ENCODE measurements at regions of chr7 and their contacts with region 1.

Region 1: GRCh38 chr7:94449148-94449725 is 54.5 kb downstream of the COL1A2 start:
- DNase-seq: no peak
- ATAC-seq: no peak
- H3K4me3 Mint-ChIP-seq: no peak overlapping the region
- H3K27ac Mint-ChIP-seq: no peak overlapping the region
- H3K4me1 Mint-ChIP-seq: no peaks in the 10 kb centered on the region
- H3K27me3 Mint-ChIP-seq: peaks cover 29% of the 10 kb centered on the region

Region 2: GRCh38 chr7:94426980-94427875 is 22.0 kb before region 1 on chr7:
- CTCF ChIA-PET with region 1: no interaction called
- DNase-seq: no peak
- ATAC-seq: no peak
- H3K4me3 Mint-ChIP-seq: no peak overlapping the region
- H3K27ac Mint-ChIP-seq: no peak overlapping the region
- H3K4me1 Mint-ChIP-seq: no peaks in the 10 kb centered on the region
- H3K27me3 Mint-ChIP-seq: peaks cover 2% of the 10 kb centered on the region

Region 3: DNA sequence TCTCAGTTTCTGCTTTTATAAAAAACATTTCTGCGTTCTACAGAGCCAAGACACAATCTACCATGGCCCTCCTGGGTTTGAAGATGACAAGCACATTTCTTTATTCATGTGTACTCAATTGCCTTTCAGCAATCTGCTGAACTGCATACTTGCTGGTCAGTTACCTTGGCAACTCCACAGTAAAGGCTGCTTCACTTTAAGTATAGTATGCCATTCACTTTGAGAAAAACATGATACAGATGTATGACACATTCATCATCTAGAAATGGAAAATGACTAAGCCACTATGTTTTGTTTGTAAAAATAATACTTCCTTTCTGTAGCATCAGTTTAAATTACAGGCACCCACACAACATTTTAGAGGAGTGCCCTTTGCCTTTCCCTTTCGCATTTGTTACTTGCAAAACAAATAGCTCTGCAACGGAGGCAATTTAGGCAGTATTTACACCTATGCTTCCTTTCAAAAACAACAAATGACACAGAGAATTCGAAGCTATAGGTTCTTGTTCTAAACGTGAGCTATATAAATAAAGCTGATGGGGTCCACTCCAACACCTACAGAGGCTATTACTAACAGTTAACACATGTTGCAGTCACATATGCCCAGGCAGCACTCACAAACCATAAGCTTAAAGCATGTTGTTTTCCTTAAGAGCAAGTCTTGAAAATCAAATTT is 183.2 kb after region 1 on chr7:
- CTCF ChIA-PET with region 1: no interaction called
- DNase-seq: no peak
- ATAC-seq: no peak
- H3K4me3 Mint-ChIP-seq: no peak overlapping the region
- H3K27ac Mint-ChIP-seq: no peak overlapping the region
- H3K4me1 Mint-ChIP-seq: no peaks in the 10 kb centered on the region
- H3K27me3 Mint-ChIP-seq: peaks cover 25% of the 10 kb centered on the region

Region 4: DNA sequence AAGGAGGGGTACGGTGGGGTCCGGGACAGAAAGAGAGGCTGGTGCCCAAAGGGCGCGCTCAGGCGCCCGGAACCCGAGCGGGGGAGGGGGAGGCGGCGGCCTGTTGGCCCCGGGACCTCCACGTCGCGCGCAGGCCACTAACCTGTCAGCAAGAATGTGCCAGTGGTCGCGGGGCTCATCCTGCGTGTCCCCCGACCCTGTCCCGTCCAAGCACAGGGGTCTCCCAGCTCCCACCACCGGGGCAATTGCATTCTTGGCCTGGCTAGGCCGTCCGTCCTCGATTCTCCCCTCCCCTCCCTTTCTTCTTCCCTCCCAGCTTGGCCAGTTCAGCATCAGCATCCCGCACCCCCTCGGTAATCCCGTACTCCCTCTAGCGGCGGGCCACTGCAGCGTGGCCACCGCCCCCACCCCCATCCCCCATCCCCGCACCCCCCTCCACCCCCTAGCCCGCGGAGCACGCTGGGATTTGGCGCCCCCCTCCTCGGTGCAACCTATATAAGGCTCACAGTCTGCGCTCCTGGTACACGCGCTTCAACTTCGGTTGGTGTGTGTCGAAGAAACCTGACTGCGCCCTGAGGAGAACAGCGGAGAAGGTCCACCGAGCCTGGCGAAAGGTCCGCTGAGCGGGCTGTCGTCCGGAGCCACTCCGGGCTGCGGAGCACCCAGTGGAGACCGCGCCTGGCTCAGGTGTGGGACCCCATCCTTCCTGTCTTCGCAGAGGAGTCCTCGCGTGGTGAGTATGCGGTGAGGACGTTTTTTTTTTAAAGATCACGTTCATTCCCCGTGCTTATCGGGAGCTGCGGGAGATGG is 206.8 kb after region 1 on chr7 and contains the start of gene SGCE:
- CTCF ChIA-PET with region 1: interaction called, 15 read pairs
- DNase-seq: peak; percentile 59
- ATAC-seq: no peak
- H3K4me3 Mint-ChIP-seq: peak within 1 kb of the TSS; percentile 73
- H3K27ac Mint-ChIP-seq: peak within 1 kb of the TSS; percentile 79
- H3K4me1 Mint-ChIP-seq: peaks cover 19% of the 10 kb centered on the region
- H3K27me3 Mint-ChIP-seq: peaks cover 39% of the 10 kb centered on the region
- total RNA-seq, gene SGCE: 2.4 to 3.2 TPM

Region 5: GRCh38 chr7:95476904-95477594 is 1027.8 kb after region 1 on chr7:
- CTCF ChIA-PET with region 1: interaction called, 19 read pairs
- DNase-seq: peak; percentile 71
- ATAC-seq: no peak
- H3K4me3 Mint-ChIP-seq: no peak overlapping the region
- H3K27ac Mint-ChIP-seq: no peak overlapping the region
- H3K4me1 Mint-ChIP-seq: peaks cover 7% of the 10 kb centered on the region
- H3K27me3 Mint-ChIP-seq: peaks cover 7% of the 10 kb centered on the region